ENCODE measurements at regions of chr5 and their contacts with region 1.

Region 1: DNA sequence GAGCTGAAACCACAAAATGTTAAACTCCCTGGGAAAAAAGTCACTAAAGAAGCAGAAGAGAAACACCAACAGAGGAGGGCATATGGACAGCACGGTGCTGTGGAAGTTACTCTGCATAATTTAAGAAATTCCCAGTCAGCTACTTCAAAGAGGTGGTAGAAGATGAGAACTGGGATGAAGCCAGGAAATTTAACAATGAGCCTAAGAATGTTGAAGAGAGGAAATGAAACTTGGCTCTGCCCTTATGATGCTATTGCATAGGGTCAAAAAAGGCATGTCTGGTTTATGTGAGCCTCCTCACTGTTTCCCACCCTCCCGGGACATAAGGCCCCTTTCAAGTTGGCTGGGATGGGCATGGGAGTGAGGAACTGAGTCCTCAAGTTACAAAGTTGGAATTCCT is 25.4 kb upstream of the SNX18 start:
- DNase-seq: no peak
- ATAC-seq: no peak
- H3K4me3 ChIP-seq: no peak overlapping the region
- H3K27ac ChIP-seq: no peak overlapping the region
- H3K4me1 ChIP-seq: peaks cover 3% of the 10 kb centered on the region; the same call in 1 of the 2 replicates
- H3K27me3 ChIP-seq: no peaks in the 10 kb centered on the region
- CTCF ChIP-seq: no peak
- EP300 ChIP-seq: no peak
- POLR2A ChIP-seq: no peak
- RAD21 ChIP-seq: no peak

Region 2: GRCh38 chr5:54206580-54207229 is 285.5 kb before region 1 on chr5:
- CTCF ChIA-PET with region 1: no interaction called
- POLR2A ChIA-PET with region 1: no interaction called
- RAD21 ChIA-PET with region 1: no interaction called
- SMC1A ChIA-PET with region 1: no interaction called
- in situ Hi-C with region 1: no loop called
- intact Hi-C with region 1: no loop called
- DNase-seq: no peak
- ATAC-seq: peak; percentile 92
- H3K4me3 ChIP-seq: 0 out of 2 replicates have a peak overlapping the region, but pooled peaks have one; percentile 8
- H3K27ac ChIP-seq: peak overlapping the region; percentile 14; the same call in 1 of the 2 replicates
- H3K4me1 ChIP-seq: no peaks in the 10 kb centered on the region
- H3K27me3 ChIP-seq: no peaks in the 10 kb centered on the region
- CTCF ChIP-seq: no peak
- EP300 ChIP-seq: no peak
- POLR2A ChIP-seq: no peak
- RAD21 ChIP-seq: no peak

Region 3: DNA sequence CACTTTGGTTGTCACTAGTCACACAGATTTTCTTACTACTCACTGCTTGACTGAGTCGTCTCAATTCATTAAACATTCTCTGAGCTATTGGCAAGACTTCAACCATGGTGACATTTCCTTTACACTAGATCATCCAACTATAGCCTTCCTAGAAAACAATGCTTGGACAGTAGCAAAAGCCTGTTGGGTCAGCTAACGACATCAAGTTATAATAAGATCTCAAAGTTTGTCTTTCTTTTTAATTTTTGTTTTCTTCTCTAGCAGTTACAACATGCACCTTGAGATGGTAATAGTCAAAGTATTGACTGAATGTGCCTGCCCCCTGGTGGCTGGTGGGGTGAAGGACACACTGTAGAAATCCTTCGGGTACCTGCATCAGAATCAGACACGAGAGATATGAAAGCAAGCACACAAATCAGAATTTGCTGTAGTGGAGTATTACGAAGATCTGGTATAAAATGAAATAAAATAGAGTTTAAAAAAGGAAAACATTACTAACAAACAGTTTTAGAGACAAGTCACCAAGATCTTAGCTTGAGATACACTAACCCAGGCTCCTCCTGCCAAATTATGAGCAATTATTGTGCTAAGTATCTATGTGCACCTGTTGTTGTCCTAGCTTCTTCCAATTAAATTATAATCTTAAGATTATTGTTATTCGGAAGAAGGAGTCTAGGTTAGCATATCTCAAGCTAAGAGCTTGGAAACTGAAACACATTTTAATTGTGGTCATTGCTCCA is 263.0 kb before region 1 on chr5:
- CTCF ChIA-PET with region 1: interaction called, 38 read pairs
- POLR2A ChIA-PET with region 1: no interaction called
- RAD21 ChIA-PET with region 1: interaction called, 6 read pairs
- SMC1A ChIA-PET with region 1: interaction called, 24 read pairs
- in situ Hi-C with region 1: no loop called
- intact Hi-C with region 1: no loop called
- DNase-seq: no peak
- ATAC-seq: peak; percentile 95
- H3K4me3 ChIP-seq: no peak overlapping the region
- H3K27ac ChIP-seq: no peak overlapping the region
- H3K4me1 ChIP-seq: no peaks in the 10 kb centered on the region
- H3K27me3 ChIP-seq: no peaks in the 10 kb centered on the region
- CTCF ChIP-seq: peak; percentile 86 to 94 (median 90)
- EP300 ChIP-seq: no peak
- POLR2A ChIP-seq: no peak
- RAD21 ChIP-seq: peak; percentile 89

Region 4: GRCh38 chr5:54249210-54250028 is 242.8 kb before region 1 on chr5:
- CTCF ChIA-PET with region 1: interaction called, 96 read pairs
- POLR2A ChIA-PET with region 1: no interaction called
- RAD21 ChIA-PET with region 1: interaction called, 40 read pairs
- SMC1A ChIA-PET with region 1: interaction called, 29 read pairs
- in situ Hi-C with region 1: no loop called
- intact Hi-C with region 1: no loop called
- DNase-seq: no peak
- ATAC-seq: peak; percentile 85
- H3K4me3 ChIP-seq: no peak overlapping the region
- H3K27ac ChIP-seq: no peak overlapping the region
- H3K4me1 ChIP-seq: no peaks in the 10 kb centered on the region; the same call in none of the 2 replicates
- H3K27me3 ChIP-seq: no peaks in the 10 kb centered on the region
- CTCF ChIP-seq: no peak
- EP300 ChIP-seq: no peak
- POLR2A ChIP-seq: no peak
- RAD21 ChIP-seq: no peak

Region 5: DNA sequence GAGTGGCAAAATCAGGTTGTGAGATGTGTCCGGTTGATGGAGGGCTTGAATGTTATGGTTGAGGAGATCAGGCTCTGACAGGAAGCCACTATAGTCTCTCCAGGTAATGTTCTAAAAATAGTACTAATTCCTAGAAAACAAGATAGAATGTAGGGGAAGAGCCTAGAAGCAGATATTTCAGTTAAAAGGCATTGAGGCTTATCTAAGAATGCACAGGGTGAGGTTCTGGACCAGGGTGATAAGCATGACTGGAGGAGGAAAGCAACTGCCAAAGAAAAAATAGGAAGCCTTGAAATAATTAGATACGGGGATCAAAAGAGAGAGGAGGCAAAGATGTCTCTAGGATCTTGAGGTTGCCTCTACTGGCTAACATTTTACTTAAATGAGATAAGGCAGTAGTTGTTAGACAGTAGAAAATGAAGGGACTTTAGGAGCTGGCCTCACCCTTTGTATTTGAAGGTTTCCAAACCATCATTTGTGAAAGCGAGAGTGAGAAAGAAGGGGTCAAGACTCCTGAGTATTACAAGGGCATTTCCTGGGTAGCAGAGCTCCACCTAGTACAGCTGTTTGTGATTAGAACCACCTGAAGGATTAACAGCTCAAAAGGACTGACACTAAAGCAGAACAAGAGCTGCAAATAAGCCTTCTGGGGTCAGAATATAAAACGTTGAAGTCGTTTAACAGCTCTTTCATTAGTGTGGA is 166.4 kb before region 1 on chr5:
- CTCF ChIA-PET with region 1: interaction called, 10 read pairs
- POLR2A ChIA-PET with region 1: interaction called, 3 read pairs
- RAD21 ChIA-PET with region 1: no interaction called
- SMC1A ChIA-PET with region 1: interaction called, 7 read pairs
- in situ Hi-C with region 1: no loop called
- intact Hi-C with region 1: no loop called
- DNase-seq: no peak
- ATAC-seq: peak; percentile 95
- H3K4me3 ChIP-seq: no peak overlapping the region
- H3K27ac ChIP-seq: no peak overlapping the region
- H3K4me1 ChIP-seq: no peaks in the 10 kb centered on the region
- H3K27me3 ChIP-seq: no peaks in the 10 kb centered on the region; a peak in 1 of 4 replicates
- CTCF ChIP-seq: no peak
- EP300 ChIP-seq: no peak
- POLR2A ChIP-seq: no peak
- RAD21 ChIP-seq: no peak

Region 6: GRCh38 chr5:54401515-54401914 is 90.7 kb before region 1 on chr5:
- CTCF ChIA-PET with region 1: interaction called, 17 read pairs
- POLR2A ChIA-PET with region 1: no interaction called
- RAD21 ChIA-PET with region 1: interaction called, 5 read pairs
- SMC1A ChIA-PET with region 1: interaction called, 4 read pairs
- in situ Hi-C with region 1: no loop called
- intact Hi-C with region 1: no loop called
- DNase-seq: no peak
- ATAC-seq: peak; percentile 96
- H3K4me3 ChIP-seq: no peak overlapping the region
- H3K27ac ChIP-seq: no peak overlapping the region
- H3K4me1 ChIP-seq: peaks cover 5% of the 10 kb centered on the region
- H3K27me3 ChIP-seq: no peaks in the 10 kb centered on the region
- CTCF ChIP-seq: no peak
- EP300 ChIP-seq: no peak
- POLR2A ChIP-seq: no peak
- RAD21 ChIP-seq: no peak

Region 7: GRCh38 chr5:54443270-54443669 is 48.9 kb before region 1 on chr5:
- CTCF ChIA-PET with region 1: interaction called, 111 read pairs
- POLR2A ChIA-PET with region 1: no interaction called
- RAD21 ChIA-PET with region 1: interaction called, 6 read pairs
- SMC1A ChIA-PET with region 1: interaction called, 27 read pairs
- in situ Hi-C with region 1: no loop called
- intact Hi-C with region 1: loop called (anchors 2 kb)
- DNase-seq: no peak
- ATAC-seq: peak; percentile 73
- H3K4me3 ChIP-seq: no peak overlapping the region
- H3K27ac ChIP-seq: no peak overlapping the region
- H3K4me1 ChIP-seq: peaks cover 21% of the 10 kb centered on the region
- H3K27me3 ChIP-seq: no peaks in the 10 kb centered on the region; a peak in 2 of 4 replicates
- CTCF ChIP-seq: peak; percentile 37 to 51 (median 43)
- EP300 ChIP-seq: no peak
- POLR2A ChIP-seq: no peak
- RAD21 ChIP-seq: peak; percentile 56; the same call in 1 of the 2 replicates

Region 8: DNA sequence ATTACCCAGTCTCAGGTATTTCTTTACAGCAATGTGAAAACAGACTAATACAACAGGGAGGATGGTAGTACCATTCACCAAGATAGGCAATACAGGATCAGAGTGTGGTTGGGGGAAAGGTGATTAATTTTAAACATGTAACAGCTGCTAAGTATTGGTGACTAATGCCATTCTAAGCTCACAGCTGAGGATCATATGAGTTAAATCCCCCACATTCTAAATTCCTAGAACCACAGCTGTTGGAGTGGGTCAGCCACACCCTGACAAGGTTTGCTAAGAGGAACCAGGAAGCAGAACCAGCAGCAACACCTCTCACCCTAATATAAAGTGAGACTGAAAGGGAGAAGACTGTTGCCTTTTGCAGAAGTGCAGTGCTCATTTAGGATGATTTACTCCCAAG is 11.9 kb before region 1 on chr5:
- CTCF ChIA-PET with region 1: interaction called, 12 read pairs
- POLR2A ChIA-PET with region 1: no interaction called
- RAD21 ChIA-PET with region 1: interaction called, 4 read pairs
- SMC1A ChIA-PET with region 1: interaction called, 3 read pairs
- in situ Hi-C with region 1: no loop called
- intact Hi-C with region 1: no loop called
- DNase-seq: no peak
- ATAC-seq: no peak
- H3K4me3 ChIP-seq: no peak overlapping the region
- H3K27ac ChIP-seq: no peak overlapping the region
- H3K4me1 ChIP-seq: no peaks in the 10 kb centered on the region
- H3K27me3 ChIP-seq: no peaks in the 10 kb centered on the region
- CTCF ChIP-seq: no peak
- EP300 ChIP-seq: no peak
- POLR2A ChIP-seq: no peak
- RAD21 ChIP-seq: no peak